HCT116 (cell line): ENCODE measurements at regions of chrX and their contacts with region 1.

Region 1: GRCh38 chrX:65985922-65986588 is 53.8 kb downstream of the VSIG4 start:
- DNase-seq: peak; percentile 57
- ATAC-seq: peak; percentile 99
- H3K4me3 ChIP-seq: no peak overlapping the region
- H3K27ac ChIP-seq: no peak overlapping the region
- H3K4me1 ChIP-seq: peaks cover 0 to 9% of the 10 kb centered on the region in 2 experiments; a peak in 1 of 4 replicates
- H3K27me3 ChIP-seq: no peaks in the 10 kb centered on the region
- CTCF ChIP-seq: peak; percentile 44 to 59 (median 54); a peak in 4 of 6 replicates
- POLR2A ChIP-seq: no peak
- RAD21 ChIP-seq: peak; percentile 80

Region 2: DNA sequence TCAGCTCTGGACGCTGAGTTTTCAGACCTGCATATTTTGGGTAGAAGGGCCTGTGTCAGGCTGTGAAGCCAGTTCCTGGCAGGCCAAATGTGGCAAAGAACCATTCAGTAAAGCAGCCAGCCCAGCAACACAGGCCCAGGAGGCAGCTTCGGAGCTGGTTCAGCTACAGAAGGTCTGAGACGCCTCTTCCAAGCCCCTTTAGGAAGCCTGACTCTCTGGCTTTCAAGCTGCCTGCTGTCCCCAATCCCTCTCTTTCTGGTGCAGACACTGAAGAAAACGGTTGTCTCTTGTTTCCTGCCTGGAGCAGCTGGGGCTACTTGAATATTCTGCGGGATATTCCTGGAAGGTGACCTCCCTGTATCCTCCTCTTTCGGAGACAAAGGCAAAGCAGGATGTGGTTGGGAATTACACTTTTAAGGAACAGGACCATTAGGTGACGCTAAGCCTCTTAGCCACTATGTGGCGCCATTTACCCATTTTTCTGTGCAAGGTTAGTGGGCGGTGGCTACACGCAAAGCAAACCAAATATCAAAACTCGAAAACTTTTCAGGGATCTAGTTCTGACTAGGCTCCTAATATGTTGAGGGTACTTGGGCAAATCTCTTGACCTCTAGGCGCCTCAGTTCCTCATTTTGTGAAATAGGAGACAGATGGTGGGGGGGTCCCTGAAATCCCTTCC is 404.3 kb before region 1 on chrX:
- CTCF ChIA-PET with region 1: interaction called, 3 read pairs
- POLR2A ChIA-PET with region 1: no interaction called
- RAD21 ChIA-PET with region 1: no interaction called
- intact Hi-C with region 1: loop called (anchors 1 kb)
- DNase-seq: peak; percentile 48
- ATAC-seq: peak; percentile 91
- H3K4me3 ChIP-seq: no peak overlapping the region
- H3K27ac ChIP-seq: no peak overlapping the region
- H3K4me1 ChIP-seq: peaks cover 0 to 5% of the 10 kb centered on the region in 2 experiments; a peak in 1 of 4 replicates
- H3K27me3 ChIP-seq: no peaks in the 10 kb centered on the region
- CTCF ChIP-seq: peak; percentile 57 to 75 (median 62); a peak in 5 of 6 replicates
- POLR2A ChIP-seq: no peak
- RAD21 ChIP-seq: peak; percentile 83

Region 3: DNA sequence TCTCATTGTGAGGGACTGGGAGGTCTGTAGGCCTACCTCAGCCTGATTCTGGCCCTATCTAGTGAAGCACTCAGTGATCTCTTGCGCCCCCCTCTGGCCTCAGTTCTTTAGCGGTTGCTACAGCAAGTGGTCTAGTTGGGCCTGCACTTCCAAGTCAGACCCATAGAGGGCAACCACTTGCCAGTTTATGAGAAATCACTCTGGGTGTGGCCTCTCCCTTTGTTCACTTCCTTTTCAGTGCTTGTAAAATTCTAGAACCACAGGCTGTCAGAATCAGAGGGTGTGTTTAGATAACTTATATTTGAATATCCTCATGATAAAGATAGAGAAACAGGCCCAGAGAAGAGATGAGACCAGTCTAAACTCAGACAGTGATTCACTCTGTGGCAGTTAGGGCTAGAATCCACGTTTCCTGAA is 390.6 kb before region 1 on chrX:
- CTCF ChIA-PET with region 1: no interaction called
- POLR2A ChIA-PET with region 1: no interaction called
- RAD21 ChIA-PET with region 1: no interaction called
- intact Hi-C with region 1: loop called (anchors 1 kb)
- DNase-seq: peak; percentile 84
- ATAC-seq: peak; percentile 95
- H3K4me3 ChIP-seq: no peak overlapping the region
- H3K27ac ChIP-seq: no peak overlapping the region
- H3K4me1 ChIP-seq: peaks cover 5 to 11% of the 10 kb centered on the region in 2 experiments; a peak in 3 of 4 replicates
- H3K27me3 ChIP-seq: no peaks in the 10 kb centered on the region
- CTCF ChIP-seq: peak; percentile 91 to 98 (median 97)
- POLR2A ChIP-seq: no peak
- RAD21 ChIP-seq: peak; percentile 87

Region 4: DNA sequence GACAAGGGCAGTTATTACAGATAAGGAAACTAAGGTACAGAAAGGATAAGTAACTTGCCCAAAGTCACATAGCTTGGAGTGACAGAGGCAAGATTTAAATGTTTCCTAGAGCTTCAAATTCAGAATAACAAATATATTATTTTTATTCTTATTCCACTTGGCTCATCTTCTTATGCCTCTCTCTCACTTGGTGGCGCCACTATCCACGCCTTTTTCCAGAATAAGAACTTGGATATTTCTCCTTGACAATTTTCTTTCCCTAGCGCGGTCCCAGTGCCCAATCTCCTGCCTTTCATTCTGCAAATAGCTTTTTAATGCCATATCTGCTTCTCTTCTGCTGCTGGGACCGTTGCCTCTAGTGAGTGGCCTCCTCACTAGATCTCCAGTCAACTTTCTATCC is 240.1 kb before region 1 on chrX:
- CTCF ChIA-PET with region 1: interaction called, 17 read pairs
- POLR2A ChIA-PET with region 1: no interaction called
- RAD21 ChIA-PET with region 1: no interaction called
- intact Hi-C with region 1: loop called (anchors 1 kb)
- DNase-seq: no peak
- ATAC-seq: no peak
- H3K4me3 ChIP-seq: no peak overlapping the region
- H3K27ac ChIP-seq: no peak overlapping the region
- H3K4me1 ChIP-seq: no peaks in the 10 kb centered on the region
- H3K27me3 ChIP-seq: no peaks in the 10 kb centered on the region
- CTCF ChIP-seq: peak; percentile 31 to 55 (median 35); a peak in 5 of 6 replicates
- POLR2A ChIP-seq: no peak
- RAD21 ChIP-seq: peak; percentile 68

Region 5: GRCh38 chrX:65871661-65872311 is 114.3 kb before region 1 on chrX:
- CTCF ChIA-PET with region 1: interaction called, 5 read pairs
- POLR2A ChIA-PET with region 1: no interaction called
- RAD21 ChIA-PET with region 1: interaction called in 1 of 2 experiments, 3 read pairs
- intact Hi-C with region 1: loop called (anchors 1 kb)
- DNase-seq: peak; percentile 67
- ATAC-seq: peak; percentile 94
- H3K4me3 ChIP-seq: no peak overlapping the region
- H3K27ac ChIP-seq: no peak overlapping the region
- H3K4me1 ChIP-seq: peaks cover 0 to 41% of the 10 kb centered on the region in 2 experiments; a peak in 2 of 4 replicates
- H3K27me3 ChIP-seq: no peaks in the 10 kb centered on the region
- CTCF ChIP-seq: peak; percentile 28 to 43 (median 36); a peak in 5 of 6 replicates
- POLR2A ChIP-seq: no peak
- RAD21 ChIP-seq: peak; percentile 54

Region 6: DNA sequence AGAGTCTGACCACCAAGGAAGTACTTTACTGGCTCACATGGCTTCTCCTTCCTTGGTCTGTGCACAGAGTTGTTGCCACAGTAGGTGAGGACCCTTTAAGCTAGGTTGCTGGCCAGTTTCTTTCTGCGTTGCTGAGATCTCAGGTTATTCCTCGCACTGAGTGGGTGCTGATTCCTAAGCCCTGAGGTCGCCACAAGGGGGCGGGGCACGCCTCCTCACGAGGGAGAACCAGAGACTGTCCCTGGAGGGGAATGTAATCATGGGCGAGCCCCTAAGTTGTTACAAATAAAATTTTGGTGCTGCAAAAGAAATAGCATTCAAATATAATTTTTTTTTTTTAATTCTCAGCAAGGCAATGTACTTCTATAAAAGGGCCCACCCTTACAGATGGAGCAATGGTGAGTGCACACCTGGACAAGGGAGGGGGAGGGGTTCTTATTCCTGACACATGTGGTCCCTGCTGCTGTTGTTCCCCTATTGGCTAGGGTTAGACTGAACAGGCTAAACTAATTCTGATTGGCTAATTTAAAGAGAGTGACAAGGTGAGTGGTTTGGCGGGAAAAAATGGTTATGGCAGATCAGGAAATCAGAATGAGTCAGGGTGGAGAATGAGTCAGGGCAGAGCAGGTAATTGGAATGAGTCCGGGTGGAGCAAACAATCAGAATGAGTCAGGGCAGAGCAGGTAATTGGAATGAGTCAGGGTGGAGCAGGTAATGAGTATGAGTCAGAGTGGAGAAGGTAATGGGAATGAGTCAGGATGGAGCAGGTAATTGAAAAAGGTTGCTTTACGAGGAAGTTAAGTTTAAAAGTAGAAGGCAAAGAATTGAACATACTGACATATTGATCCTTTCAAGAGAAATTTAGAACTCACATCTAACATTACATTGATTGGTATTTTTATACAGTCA is 53.6 kb before region 1 on chrX:
- CTCF ChIA-PET with region 1: no interaction called
- POLR2A ChIA-PET with region 1: no interaction called
- RAD21 ChIA-PET with region 1: no interaction called
- intact Hi-C with region 1: loop called (anchors 2 kb)
- DNase-seq: peak; percentile 92
- ATAC-seq: peak; percentile 86
- H3K4me3 ChIP-seq: 0 out of 4 replicates have a peak overlapping the region, but pooled peaks of 1 of the 2 experiments have one; percentile 6
- H3K27ac ChIP-seq: peak overlapping the region; percentile 98
- H3K4me1 ChIP-seq: peaks cover 11 to 47% of the 10 kb centered on the region in 2 experiments; a peak in 3 of 4 replicates
- H3K27me3 ChIP-seq: no peaks in the 10 kb centered on the region
- CTCF ChIP-seq: peak in 2 of 3 experiments; percentile 28 to 49; a peak in 3 of 6 replicates
- POLR2A ChIP-seq: no peak
- RAD21 ChIP-seq: peak; percentile 24; the same call in 1 of the 2 replicates